Endothelial cell of umbilical vein (primary cell): ENCODE measurements at regions of chr11 and their contacts with region 1.

Region 1: DNA sequence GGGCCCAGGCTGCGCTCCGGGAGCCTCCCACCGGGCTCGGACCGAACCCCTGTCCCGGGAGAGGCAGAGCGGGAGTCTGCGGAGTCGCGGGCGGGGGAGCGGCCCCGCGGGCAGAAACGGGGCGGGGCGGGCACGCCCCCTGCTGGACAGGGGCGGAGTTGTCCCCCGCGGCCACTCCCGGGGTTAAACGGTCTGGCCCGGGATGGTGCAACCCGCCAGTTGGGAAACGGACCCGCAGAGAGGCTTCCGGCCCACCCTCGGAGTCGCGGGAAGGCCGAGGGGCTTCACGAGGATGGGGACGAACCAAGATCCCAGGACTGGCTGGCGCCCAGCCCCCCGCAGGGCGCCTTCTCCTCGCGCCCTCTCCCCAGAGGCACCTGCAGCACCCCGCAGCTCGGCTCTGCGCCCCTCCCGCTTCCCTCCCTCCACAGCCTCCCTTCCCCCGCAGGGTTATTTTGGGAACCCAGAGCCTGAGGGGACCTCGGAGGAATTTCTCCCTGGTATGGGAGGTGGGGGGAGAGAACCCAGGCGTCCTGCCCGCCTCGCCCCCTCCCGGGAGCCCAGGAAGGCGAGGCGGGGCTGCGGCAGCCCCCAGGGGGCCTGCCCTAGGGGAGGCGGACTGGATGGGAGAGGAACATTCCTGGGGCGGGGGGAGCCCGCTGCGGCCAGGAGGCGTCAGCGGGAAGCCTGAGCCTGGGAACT is 902 bp downstream of the RASGRP2 start:
- DNase-seq: peak; percentile 32
- H3K4me3 ChIP-seq: peak overlapping the region in 1 of 3 experiments; percentile 2
- H3K27ac ChIP-seq: no peak overlapping the region
- H3K4me1 ChIP-seq: peaks cover 13% of the 10 kb centered on the region
- H3K27me3 ChIP-seq: peaks cover 27 to 32% of the 10 kb centered on the region in 2 experiments
- CTCF ChIP-seq: peak; percentile 77 to 90
- POLR2A ChIP-seq: no peak

Region 2: DNA sequence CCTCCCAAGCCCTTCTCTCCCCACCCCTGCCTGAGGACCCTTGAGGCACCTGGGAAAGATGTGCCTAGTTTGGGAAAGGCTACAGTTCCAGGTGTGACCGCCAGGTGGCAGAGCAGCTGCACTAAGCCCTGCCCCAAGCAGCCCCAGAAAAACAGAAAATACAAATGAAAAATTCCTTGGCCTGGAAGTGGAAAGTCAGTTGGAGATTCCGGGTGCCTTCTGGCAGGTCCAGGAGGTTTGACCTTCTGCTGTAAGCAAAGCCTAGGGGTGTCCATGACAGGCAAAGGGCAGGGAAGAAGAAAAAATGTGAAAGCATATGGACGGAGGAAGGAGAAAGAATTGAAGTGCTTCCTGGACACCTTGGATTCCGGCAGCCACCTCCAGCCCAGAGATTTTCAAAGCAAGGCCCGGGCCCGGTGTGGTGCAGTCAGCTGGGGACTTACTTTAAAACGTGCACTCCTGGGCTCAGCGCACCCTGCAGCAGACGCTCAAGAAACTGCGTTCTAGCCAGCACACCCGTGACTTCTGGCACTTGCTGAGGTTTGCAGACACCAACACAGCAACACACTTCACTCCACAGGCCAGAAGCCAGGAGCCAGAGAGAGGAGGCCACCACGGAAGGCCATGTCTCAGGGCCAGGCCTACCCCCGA is 189.4 kb before region 1 on chr11:
- CTCF ChIA-PET with region 1: no interaction called
- POLR2A ChIA-PET with region 1: no interaction called
- dilution Hi-C with region 1: no loop called
- intact Hi-C with region 1: loop called (anchors 1 kb)
- DNase-seq: peak; percentile 54
- H3K4me3 ChIP-seq: no peak overlapping the region
- H3K27ac ChIP-seq: no peak overlapping the region
- H3K4me1 ChIP-seq: peaks cover 10% of the 10 kb centered on the region
- H3K27me3 ChIP-seq: no peaks in the 10 kb centered on the region
- CTCF ChIP-seq: peak; percentile 96 to 97
- POLR2A ChIP-seq: no peak

Region 3: DNA sequence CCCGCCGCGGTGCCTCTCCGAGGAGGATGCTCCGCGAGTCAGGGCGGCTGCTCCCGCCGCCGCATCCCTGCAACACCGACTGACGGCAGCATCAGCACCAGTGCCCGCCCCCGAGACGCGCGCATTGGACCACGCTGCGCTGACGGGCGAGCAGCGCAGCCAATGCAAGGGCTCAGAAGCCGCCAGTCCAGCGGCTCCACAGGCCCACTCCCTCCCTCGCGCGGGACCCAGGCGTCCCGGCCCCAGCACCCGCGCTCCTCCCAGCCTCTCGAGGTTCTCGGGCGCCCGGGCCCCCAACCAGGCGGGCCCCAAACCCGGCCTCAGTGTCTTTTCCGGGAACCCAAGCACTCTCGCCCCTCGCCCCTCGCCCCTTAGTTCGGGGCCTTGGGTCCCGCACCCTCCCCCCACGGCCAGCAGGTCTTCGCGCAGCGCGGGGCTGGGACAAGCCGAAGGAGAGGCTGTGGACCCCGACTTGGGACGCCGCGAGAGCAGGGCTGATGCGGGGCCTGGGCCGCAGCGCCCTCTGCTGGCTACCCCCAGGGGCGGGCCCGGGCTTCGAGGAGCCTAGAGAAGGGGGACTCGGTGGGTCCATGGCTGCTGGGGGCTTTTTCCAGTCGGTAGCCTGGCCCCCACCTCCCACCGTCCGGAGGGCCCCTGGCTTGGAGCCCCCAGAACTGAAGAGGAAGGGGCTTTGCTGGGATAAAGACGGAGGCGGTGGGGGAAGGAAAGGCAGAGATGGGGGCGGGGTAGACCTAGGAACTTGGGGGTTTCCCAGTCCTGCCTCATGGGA is 19.7 kb before region 1 on chr11 and contains the start of gene NRXN2:
- CTCF ChIA-PET with region 1: interaction called, 14 read pairs
- POLR2A ChIA-PET with region 1: no interaction called
- dilution Hi-C with region 1: no loop called
- intact Hi-C with region 1: no loop called
- DNase-seq: peak; percentile 80
- H3K4me3 ChIP-seq: peak within 1 kb of the TSS; percentile 15 to 44 (median 30)
- H3K27ac ChIP-seq: no peak within 1 kb of the TSS
- H3K4me1 ChIP-seq: no peaks in the 10 kb centered on the region
- H3K27me3 ChIP-seq: peaks cover 15 to 16% of the 10 kb centered on the region in 2 experiments
- CTCF ChIP-seq: peak; percentile 97
- POLR2A ChIP-seq: no peak
- total RNA-seq, gene NRXN2: not detected in 2 replicates